GM12878 (cell line): ENCODE measurements at regions of chr17 and their contacts with region 1.

Region 1: DNA sequence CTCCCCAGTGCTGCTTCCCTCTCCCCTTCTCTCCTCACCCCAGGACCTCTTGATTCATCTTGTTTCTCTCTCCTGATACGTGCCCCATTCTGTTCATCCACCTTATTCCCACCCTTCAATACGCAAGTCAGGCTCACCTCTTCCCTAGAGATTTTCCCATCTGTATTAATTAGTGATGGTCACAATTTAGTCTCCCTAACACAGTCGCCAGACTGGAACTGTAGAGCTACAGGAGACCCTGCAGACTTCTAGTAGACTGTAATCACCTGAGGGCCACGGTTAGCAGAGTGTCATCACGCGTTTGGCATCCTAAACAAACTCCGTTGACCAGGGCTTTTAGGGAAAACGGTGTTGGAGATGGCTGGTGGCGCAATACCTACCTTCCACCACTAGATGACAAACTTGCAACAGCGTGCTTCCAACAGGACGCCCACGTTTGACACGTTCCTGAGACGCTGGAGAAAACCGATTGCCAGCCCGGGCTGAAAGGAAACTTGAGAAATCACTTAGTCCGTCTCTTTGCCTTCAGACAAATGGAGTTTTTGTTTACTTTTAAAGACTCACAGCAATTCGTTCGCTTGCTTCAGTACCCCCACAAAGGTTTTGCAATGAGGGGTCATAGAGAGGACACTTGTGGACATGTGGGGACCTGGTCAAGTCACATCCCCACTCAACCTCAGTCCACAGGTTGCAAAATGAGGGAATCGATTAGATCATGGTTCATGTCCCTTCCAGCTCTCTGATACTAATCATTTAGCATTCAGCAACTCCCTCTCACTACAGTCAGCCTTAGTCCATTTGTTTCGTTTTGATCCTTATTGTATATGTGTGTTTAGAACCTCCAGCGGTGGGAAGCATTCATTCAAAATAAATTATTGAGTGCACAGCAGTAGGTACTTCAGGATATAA is 20.6 kb downstream of the MYL4 start:
- DNase-seq: peak; percentile 75
- ATAC-seq: peak; percentile 84
- H3K4me3 ChIP-seq: peak overlapping the region; percentile 37; the same call in 1 of the 2 replicates
- H3K27ac ChIP-seq: no peak overlapping the region
- H3K4me1 ChIP-seq: peaks cover 18% of the 10 kb centered on the region
- H3K27me3 ChIP-seq: no peaks in the 10 kb centered on the region; a peak in 1 of 4 replicates
- CTCF ChIP-seq: peak; percentile 99 to 100 (median 100); a peak in 5 of 6 replicates
- EP300 ChIP-seq: no peak
- POLR2A ChIP-seq: no peak
- RAD21 ChIP-seq: peak; percentile 100

Region 2: DNA sequence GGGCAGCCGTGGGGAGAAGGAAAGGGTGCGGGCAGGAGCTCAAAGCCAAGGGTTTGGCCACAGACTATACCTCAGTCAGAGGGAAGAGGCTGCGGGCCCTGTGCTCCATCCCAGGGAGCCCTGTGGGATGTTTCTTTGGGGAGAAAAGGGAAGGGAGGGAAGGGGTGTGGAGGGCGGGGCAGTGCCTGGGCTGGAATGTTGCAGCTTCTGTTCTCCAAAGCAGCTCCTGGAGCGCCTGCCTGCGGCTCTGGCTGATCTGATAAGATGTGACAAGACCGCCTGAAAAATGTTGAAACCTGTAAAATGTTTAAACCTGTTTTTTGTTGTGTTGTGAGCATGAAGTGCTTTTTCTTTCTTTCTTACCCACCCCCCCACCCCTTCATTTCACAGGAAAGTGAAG is 444.1 kb before region 1 on chr17:
- CTCF ChIA-PET with region 1: no interaction called
- POLR2A ChIA-PET with region 1: no interaction called
- RAD21 ChIA-PET with region 1: no interaction called
- SMC1A ChIA-PET with region 1: no interaction called
- in situ Hi-C with region 1: no loop called
- intact Hi-C with region 1: no loop called
- DNase-seq: no peak
- ATAC-seq: no peak
- H3K4me3 ChIP-seq: no peak overlapping the region
- H3K27ac ChIP-seq: no peak overlapping the region
- H3K4me1 ChIP-seq: no peaks in the 10 kb centered on the region
- H3K27me3 ChIP-seq: no peaks in the 10 kb centered on the region
- CTCF ChIP-seq: no peak
- EP300 ChIP-seq: no peak
- POLR2A ChIP-seq: no peak
- RAD21 ChIP-seq: no peak

Region 3: GRCh38 chr17:47131761-47132160 is 98.0 kb before region 1 on chr17:
- CTCF ChIA-PET with region 1: no interaction called
- POLR2A ChIA-PET with region 1: no interaction called
- RAD21 ChIA-PET with region 1: no interaction called
- SMC1A ChIA-PET with region 1: no interaction called
- in situ Hi-C with region 1: no loop called
- intact Hi-C with region 1: no loop called
- DNase-seq: no peak
- ATAC-seq: no peak
- H3K4me3 ChIP-seq: no peak overlapping the region
- H3K27ac ChIP-seq: no peak overlapping the region
- H3K4me1 ChIP-seq: no peaks in the 10 kb centered on the region
- H3K27me3 ChIP-seq: no peaks in the 10 kb centered on the region
- CTCF ChIP-seq: no peak
- EP300 ChIP-seq: no peak
- POLR2A ChIP-seq: no peak
- RAD21 ChIP-seq: no peak

Region 4: DNA sequence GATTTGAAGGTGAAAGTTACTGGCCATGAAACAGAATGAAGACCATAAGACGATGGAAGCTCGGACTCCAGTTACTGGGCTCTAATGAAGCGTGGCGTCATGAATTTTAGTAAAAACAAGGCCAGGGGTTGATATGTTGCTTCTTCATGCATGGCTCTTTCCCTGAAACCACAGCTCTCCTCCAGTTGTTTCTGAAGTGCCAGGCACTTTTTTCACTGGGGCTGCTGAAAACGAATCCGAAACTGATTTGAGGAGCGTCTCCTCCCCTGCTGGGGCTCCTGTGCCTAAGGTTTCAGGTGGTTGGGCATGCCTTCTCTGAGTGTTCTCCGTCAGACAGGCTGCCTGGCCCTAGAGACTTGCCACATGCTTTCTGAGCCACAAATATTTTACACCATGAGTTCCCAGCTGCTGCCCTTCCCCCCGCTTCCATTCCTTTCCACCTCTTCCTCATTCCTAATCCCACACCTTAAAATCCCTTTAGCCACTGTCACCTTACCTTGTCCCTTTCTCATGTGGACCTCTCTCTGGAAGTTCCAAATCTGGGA is 24.3 kb before region 1 on chr17:
- CTCF ChIA-PET with region 1: interaction called, 40 read pairs
- POLR2A ChIA-PET with region 1: interaction called, 6 read pairs
- RAD21 ChIA-PET with region 1: interaction called, 20 read pairs
- SMC1A ChIA-PET with region 1: interaction called, 79 read pairs
- in situ Hi-C with region 1: no loop called
- intact Hi-C with region 1: no loop called
- DNase-seq: peak; percentile 78
- ATAC-seq: peak; percentile 85
- H3K4me3 ChIP-seq: peak overlapping the region; percentile 2; the same call in 1 of the 2 replicates
- H3K27ac ChIP-seq: peak overlapping the region; percentile 68
- H3K4me1 ChIP-seq: peaks cover 64% of the 10 kb centered on the region
- H3K27me3 ChIP-seq: no peaks in the 10 kb centered on the region
- CTCF ChIP-seq: no peak
- EP300 ChIP-seq: peak in 1 of 2 experiments; percentile 39; a peak in 1 of 4 replicates
- POLR2A ChIP-seq: peak; percentile 31; the same call in 1 of the 2 replicates
- RAD21 ChIP-seq: no peak

Region 5: DNA sequence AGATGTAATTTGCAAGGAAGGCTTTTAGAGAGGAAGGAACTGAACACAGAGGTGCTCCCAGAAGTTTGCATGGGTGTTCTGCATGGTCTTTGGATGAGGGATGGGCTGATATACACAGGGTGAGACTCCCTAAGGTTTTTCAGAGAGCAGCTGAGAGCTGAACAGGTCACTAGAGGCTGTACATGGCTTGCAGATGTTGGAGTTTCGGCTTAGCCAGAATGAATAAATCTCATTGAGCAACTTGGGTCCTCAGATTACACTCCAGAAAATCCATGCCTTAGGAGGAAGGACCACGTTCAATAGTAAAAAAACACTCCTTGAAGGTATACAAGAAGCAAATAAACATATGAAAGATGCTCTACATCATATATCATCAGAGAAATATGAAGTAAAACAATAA is 16.3 kb after region 1 on chr17:
- CTCF ChIA-PET with region 1: interaction called, 16 read pairs
- POLR2A ChIA-PET with region 1: interaction called, 3 read pairs
- RAD21 ChIA-PET with region 1: interaction called, 12 read pairs
- SMC1A ChIA-PET with region 1: interaction called, 13 read pairs
- in situ Hi-C with region 1: no loop called
- intact Hi-C with region 1: no loop called
- DNase-seq: no peak
- ATAC-seq: no peak
- H3K4me3 ChIP-seq: no peak overlapping the region
- H3K27ac ChIP-seq: no peak overlapping the region
- H3K4me1 ChIP-seq: no peaks in the 10 kb centered on the region
- H3K27me3 ChIP-seq: no peaks in the 10 kb centered on the region
- CTCF ChIP-seq: no peak
- EP300 ChIP-seq: no peak
- POLR2A ChIP-seq: no peak
- RAD21 ChIP-seq: no peak

Region 6: GRCh38 chr17:47265983-47266541 is 36.3 kb after region 1 on chr17:
- CTCF ChIA-PET with region 1: interaction called, 4 read pairs
- POLR2A ChIA-PET with region 1: interaction called, 3 read pairs
- RAD21 ChIA-PET with region 1: no interaction called
- SMC1A ChIA-PET with region 1: interaction called, 13 read pairs
- in situ Hi-C with region 1: no loop called
- intact Hi-C with region 1: no loop called
- DNase-seq: no peak
- ATAC-seq: peak; percentile 42
- H3K4me3 ChIP-seq: no peak overlapping the region
- H3K27ac ChIP-seq: no peak overlapping the region
- H3K4me1 ChIP-seq: 0 out of 2 replicates have a peak, but pooled peaks cover 3% of the 10 kb centered on the region
- H3K27me3 ChIP-seq: no peaks in the 10 kb centered on the region
- CTCF ChIP-seq: no peak
- EP300 ChIP-seq: no peak
- POLR2A ChIP-seq: no peak
- RAD21 ChIP-seq: no peak

Region 7: DNA sequence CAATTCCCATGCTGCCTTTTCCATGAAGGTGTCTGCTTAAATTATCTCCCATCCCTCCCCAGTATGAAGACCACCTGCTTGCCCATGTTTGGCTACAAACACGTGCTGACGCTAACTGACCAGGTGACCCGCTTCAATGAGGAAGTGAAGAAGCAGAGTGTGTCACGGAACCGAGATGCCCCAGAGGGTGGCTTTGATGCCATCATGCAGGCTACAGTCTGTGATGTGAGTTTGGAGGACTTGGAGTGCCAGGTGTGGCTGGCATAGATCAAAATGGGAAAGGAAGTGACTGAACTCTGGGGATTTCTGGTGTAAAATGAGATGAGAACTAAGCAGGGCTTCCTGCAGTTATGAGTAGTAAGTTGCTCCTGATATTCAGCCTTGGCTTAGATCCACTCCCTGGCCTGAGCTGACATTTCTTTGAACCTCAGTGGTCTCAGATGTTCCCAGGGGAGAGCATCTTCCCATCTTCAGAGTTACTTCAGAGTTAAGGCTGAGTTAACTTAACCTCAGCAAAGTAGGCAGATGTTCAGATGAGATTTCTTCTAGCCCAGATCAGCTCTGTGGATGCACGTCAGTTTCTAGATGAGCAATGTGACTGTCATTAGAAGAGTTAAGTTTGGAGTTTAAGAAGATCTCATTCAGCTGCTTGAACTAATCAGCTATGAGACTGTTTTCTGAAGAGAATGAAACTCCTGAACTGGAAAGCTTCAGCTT is 56.6 kb after region 1 on chr17:
- CTCF ChIA-PET with region 1: interaction called, 73 read pairs
- POLR2A ChIA-PET with region 1: interaction called, 11 read pairs
- RAD21 ChIA-PET with region 1: interaction called, 68 read pairs
- SMC1A ChIA-PET with region 1: interaction called, 110 read pairs
- in situ Hi-C with region 1: no loop called
- intact Hi-C with region 1: loop called (anchors 1 kb)
- DNase-seq: peak; percentile 98
- ATAC-seq: peak; percentile 85
- H3K4me3 ChIP-seq: no peak overlapping the region
- H3K27ac ChIP-seq: peak overlapping the region; percentile 97
- H3K4me1 ChIP-seq: peaks cover 30% of the 10 kb centered on the region
- H3K27me3 ChIP-seq: no peaks in the 10 kb centered on the region
- CTCF ChIP-seq: no peak
- EP300 ChIP-seq: peak; percentile 65 to 70; a peak in 2 of 4 replicates
- POLR2A ChIP-seq: peak; percentile 54
- RAD21 ChIP-seq: peak; percentile 30; the same call in 1 of the 2 replicates

Region 8: GRCh38 chr17:47305302-47305923 is 75.6 kb after region 1 on chr17:
- CTCF ChIA-PET with region 1: interaction called, 227 read pairs
- POLR2A ChIA-PET with region 1: interaction called, 3 read pairs
- RAD21 ChIA-PET with region 1: interaction called, 7 read pairs
- SMC1A ChIA-PET with region 1: interaction called, 7 read pairs
- in situ Hi-C with region 1: loop called (anchors 5 kb)
- intact Hi-C with region 1: no loop called
- DNase-seq: no peak
- ATAC-seq: peak; percentile 63
- H3K4me3 ChIP-seq: no peak overlapping the region
- H3K27ac ChIP-seq: no peak overlapping the region
- H3K4me1 ChIP-seq: no peaks in the 10 kb centered on the region
- H3K27me3 ChIP-seq: no peaks in the 10 kb centered on the region
- CTCF ChIP-seq: no peak
- EP300 ChIP-seq: no peak
- POLR2A ChIP-seq: no peak
- RAD21 ChIP-seq: no peak

Region 9: GRCh38 chr17:47615766-47616424 is 386.1 kb after region 1 on chr17:
- CTCF ChIA-PET with region 1: interaction called, 48 read pairs
- POLR2A ChIA-PET with region 1: no interaction called
- RAD21 ChIA-PET with region 1: interaction called, 17 read pairs
- SMC1A ChIA-PET with region 1: interaction called, 24 read pairs
- in situ Hi-C with region 1: loop called (anchors 5 kb)
- intact Hi-C with region 1: loop called (anchors 2 kb)
- DNase-seq: peak; percentile 16
- ATAC-seq: peak; percentile 83
- H3K4me3 ChIP-seq: no peak overlapping the region
- H3K27ac ChIP-seq: no peak overlapping the region
- H3K4me1 ChIP-seq: no peaks in the 10 kb centered on the region
- H3K27me3 ChIP-seq: no peaks in the 10 kb centered on the region
- CTCF ChIP-seq: peak; percentile 38 to 63 (median 61); a peak in 5 of 6 replicates
- EP300 ChIP-seq: no peak
- POLR2A ChIP-seq: no peak
- RAD21 ChIP-seq: peak; percentile 71